ENCODE measurements at regions of chr5 and their contacts with region 1.

Region 1: DNA sequence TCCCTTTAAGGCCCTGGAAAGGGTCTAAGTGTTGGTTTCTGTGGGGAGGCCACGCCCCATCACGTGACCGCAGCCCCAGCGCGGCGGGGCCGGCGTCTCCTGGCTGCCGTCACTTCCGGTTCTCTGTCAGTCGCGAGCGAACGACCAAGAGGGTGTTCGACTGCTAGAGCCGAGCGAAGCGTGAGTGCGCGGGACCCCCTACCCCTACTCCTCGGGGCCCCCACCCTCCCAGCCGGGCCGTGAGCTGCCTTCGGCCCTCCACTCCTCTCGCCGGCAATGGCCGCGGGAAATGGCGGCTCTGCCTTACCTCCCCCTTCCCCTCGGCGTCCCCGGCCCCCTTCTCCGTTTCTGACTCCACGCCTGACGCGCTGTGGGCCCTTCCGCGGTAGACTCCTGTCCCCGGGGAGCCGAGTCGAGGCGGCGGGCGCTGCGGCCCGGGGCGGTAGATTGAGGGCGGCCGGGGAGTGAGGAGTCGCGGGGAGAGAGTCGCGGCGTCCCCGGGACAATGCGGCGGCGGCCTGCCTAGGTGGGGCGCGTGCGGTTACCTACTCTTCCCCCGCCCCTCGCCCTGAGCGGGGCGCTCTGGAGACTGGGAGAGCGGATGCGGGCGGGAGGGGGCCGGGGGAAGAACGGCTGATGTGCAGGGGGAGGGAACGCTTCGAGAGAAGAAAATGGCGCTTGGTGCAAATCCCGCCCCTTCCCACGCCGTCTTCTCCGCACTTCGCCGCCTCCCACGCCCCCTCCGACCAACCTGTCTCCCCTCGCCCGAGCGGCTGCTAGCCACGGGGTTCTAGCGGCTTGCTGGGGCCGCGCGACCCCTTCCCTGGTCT is at the start of gene SUB1:
- DNase-seq: peak; percentile 96
- ATAC-seq: peak; percentile 87
- H3K4me3 Mint-ChIP-seq: peak within 1 kb of the TSS; percentile 93
- H3K27ac Mint-ChIP-seq: peak within 1 kb of the TSS; percentile 99
- H3K4me1 Mint-ChIP-seq: peaks cover 60% of the 10 kb centered on the region
- H3K27me3 Mint-ChIP-seq: no peaks in the 10 kb centered on the region
- total RNA-seq, gene SUB1: 418 to 458 TPM

Region 2: GRCh38 chr5:30838936-30839496 is 1746.6 kb before region 1 on chr5:
- CTCF ChIA-PET with region 1: no interaction called
- POLR2A ChIA-PET with region 1: no interaction called
- intact Hi-C with region 1: no loop called
- DNase-seq: no peak
- ATAC-seq: no peak
- H3K4me3 Mint-ChIP-seq: no peak overlapping the region
- H3K27ac Mint-ChIP-seq: no peak overlapping the region
- H3K4me1 Mint-ChIP-seq: no peaks in the 10 kb centered on the region
- H3K27me3 Mint-ChIP-seq: no peaks in the 10 kb centered on the region

Region 3: GRCh38 chr5:31078956-31079355 is 1506.7 kb before region 1 on chr5:
- CTCF ChIA-PET with region 1: no interaction called
- POLR2A ChIA-PET with region 1: no interaction called
- intact Hi-C with region 1: no loop called
- DNase-seq: no peak
- ATAC-seq: no peak
- H3K4me3 Mint-ChIP-seq: no peak overlapping the region
- H3K27ac Mint-ChIP-seq: no peak overlapping the region
- H3K4me1 Mint-ChIP-seq: no peaks in the 10 kb centered on the region
- H3K27me3 Mint-ChIP-seq: no peaks in the 10 kb centered on the region

Region 4: DNA sequence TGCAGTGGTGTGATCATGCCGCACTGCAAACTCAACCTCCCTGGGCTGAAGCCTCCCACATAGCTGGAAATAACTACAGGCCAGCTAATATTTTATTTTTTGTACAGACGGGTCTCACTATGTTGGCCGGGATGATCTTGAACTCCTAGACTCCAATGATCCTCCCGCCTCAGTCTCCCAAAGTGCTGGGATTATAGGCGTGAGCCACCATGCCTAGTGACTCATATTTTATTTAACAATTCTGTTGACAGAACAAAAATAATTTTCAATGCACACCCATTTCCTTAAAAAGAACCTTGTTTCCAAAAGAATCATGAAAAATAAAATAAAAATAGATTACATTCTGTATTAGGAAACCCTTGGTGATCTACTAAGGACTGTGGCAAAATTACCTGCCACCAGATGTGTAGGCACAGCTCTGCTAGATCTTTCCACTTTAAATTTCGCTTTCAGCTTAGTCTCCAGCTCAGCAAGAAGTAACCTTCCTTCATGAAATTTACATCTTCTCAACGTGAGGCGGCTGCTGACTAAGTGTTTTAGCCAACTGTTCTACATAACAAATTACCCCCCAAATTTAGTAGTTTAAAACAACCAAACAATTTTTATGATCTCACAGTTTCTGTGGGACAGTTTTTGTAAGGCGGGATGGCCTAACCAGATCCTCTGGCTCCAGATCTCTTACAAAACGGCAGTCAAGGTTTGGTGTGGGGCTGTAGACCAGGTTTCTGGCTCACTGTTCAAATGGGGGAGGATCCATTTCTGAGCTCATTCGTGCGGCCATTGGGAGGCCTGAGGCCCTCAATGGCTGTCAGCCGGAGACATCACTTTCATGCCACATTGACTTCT is 378.9 kb before region 1 on chr5:
- CTCF ChIA-PET with region 1: no interaction called
- POLR2A ChIA-PET with region 1: no interaction called
- intact Hi-C with region 1: loop called in 1 of 2 experiments (anchors 1 kb)
- DNase-seq: no peak
- ATAC-seq: no peak
- H3K4me3 Mint-ChIP-seq: no peak overlapping the region
- H3K27ac Mint-ChIP-seq: peak overlapping the region; percentile 82
- H3K4me1 Mint-ChIP-seq: peaks cover 39% of the 10 kb centered on the region
- H3K27me3 Mint-ChIP-seq: peaks cover under 1% of the 10 kb centered on the region

Region 5: DNA sequence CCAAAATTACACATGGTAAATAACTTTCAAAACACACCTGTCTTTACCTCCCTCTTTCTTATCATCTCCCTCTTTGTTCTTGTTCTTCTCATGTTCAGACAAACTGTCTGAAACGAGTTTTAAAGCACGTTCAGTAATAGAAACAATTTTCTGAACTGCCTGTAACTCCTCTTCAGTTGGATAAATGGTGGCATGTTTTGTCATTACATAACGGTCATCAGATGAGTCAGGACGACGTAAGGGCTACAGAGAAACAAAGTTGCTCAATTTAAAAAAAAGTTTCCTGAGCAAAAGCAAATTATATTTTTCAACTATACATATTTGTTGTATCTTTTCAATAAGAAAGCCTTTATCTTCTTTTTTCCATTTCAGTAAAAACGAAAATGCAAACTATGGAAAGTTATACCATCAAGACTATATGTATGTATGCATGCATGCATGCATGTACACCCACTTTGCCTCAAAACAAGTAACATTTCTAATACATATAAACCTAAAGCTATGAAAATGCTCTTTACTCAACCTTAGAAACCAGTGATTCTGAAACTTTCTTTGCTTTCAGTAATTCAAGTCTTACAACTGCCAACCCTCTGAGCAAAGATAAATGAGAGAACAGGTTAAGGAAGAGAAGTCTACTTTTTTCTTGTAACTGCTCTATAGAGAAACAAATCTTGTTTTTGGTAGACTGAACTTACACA is 197.1 kb before region 1 on chr5:
- CTCF ChIA-PET with region 1: interaction called, 3 read pairs
- POLR2A ChIA-PET with region 1: interaction called, 5 read pairs
- intact Hi-C with region 1: loop called in 1 of 2 experiments (anchors 5 kb)
- DNase-seq: no peak
- ATAC-seq: peak; percentile 75
- H3K4me3 Mint-ChIP-seq: no peak overlapping the region
- H3K27ac Mint-ChIP-seq: peak overlapping the region; percentile 88
- H3K4me1 Mint-ChIP-seq: peaks cover 11% of the 10 kb centered on the region
- H3K27me3 Mint-ChIP-seq: no peaks in the 10 kb centered on the region

Region 6: DNA sequence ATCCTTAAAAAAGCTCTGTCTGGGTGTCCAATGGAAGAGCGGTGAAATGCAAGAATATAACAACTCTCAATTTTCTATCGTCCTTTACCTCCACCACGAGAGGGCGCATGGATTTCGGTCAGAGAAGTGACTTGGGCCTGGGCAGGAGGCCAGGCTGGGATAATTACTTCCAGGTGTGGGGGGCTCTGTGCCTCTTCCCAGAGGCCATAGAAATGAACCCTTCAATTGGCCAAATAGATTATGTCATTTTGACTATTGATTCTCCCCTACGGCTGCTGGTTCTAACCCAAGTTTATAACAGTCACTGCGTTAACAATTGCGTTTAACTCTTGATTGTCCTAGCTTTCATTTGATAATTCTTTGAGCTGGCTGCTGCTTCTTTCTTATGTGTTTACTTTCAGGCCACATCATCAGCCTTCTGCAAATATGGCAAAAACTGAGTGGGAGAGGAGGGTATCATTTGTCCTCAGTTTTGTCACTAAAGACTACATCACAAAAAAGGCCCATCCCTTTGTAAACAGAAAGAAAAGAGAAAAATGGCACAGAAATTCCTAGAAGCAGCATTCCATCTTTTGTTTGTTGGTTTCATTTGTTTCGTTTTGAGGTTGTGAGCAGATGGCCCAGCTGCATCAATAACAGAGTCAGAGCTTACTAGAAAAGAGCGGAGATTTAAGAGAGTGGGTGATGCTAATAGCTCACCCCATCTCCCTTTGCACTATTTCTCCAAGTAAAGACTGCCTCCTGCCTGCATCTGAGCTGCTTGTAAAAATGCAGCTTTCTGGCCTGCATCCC is 95.7 kb before region 1 on chr5:
- CTCF ChIA-PET with region 1: interaction called, 244 read pairs
- POLR2A ChIA-PET with region 1: interaction called, 4 read pairs
- intact Hi-C with region 1: loop called (anchors 1 kb)
- DNase-seq: peak; percentile 85
- ATAC-seq: peak; percentile 53
- H3K4me3 Mint-ChIP-seq: no peak overlapping the region
- H3K27ac Mint-ChIP-seq: no peak overlapping the region
- H3K4me1 Mint-ChIP-seq: no peaks in the 10 kb centered on the region
- H3K27me3 Mint-ChIP-seq: no peaks in the 10 kb centered on the region

Region 7: GRCh38 chr5:32542216-32543059 is 43.2 kb before region 1 on chr5:
- CTCF ChIA-PET with region 1: interaction called, 16 read pairs
- POLR2A ChIA-PET with region 1: interaction called, 4 read pairs
- intact Hi-C with region 1: loop called (anchors 1 kb)
- DNase-seq: peak; percentile 61
- ATAC-seq: peak; percentile 82
- H3K4me3 Mint-ChIP-seq: peak overlapping the region; percentile 36
- H3K27ac Mint-ChIP-seq: peak overlapping the region; percentile 95
- H3K4me1 Mint-ChIP-seq: peaks cover 52% of the 10 kb centered on the region
- H3K27me3 Mint-ChIP-seq: no peaks in the 10 kb centered on the region

Region 8: GRCh38 chr5:32865475-32865874 is 279.8 kb after region 1 on chr5:
- CTCF ChIA-PET with region 1: no interaction called
- POLR2A ChIA-PET with region 1: no interaction called
- intact Hi-C with region 1: no loop called
- DNase-seq: no peak
- ATAC-seq: no peak
- H3K4me3 Mint-ChIP-seq: no peak overlapping the region
- H3K27ac Mint-ChIP-seq: no peak overlapping the region
- H3K4me1 Mint-ChIP-seq: no peaks in the 10 kb centered on the region
- H3K27me3 Mint-ChIP-seq: no peaks in the 10 kb centered on the region

Region 9: DNA sequence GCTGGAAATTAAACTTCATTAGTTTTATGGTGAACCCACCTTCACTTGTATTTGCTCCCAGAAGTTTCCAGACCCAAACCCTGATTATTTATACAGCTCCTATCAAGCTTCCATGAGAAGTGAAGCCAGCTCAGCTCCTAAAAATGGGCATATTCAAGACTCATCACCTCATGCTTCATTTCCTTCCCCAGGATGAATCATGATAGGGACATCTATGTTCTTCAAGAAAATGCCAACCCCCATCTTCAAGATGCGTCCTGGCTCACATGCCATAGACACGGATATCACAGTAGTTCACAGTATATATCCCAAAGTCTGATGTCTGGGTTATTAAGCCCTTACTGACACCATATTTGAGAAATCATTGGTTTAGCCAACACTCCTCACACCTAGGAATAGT is 343.1 kb after region 1 on chr5:
- CTCF ChIA-PET with region 1: no interaction called
- POLR2A ChIA-PET with region 1: no interaction called
- intact Hi-C with region 1: no loop called
- DNase-seq: no peak
- ATAC-seq: no peak
- H3K4me3 Mint-ChIP-seq: no peak overlapping the region
- H3K27ac Mint-ChIP-seq: no peak overlapping the region
- H3K4me1 Mint-ChIP-seq: no peaks in the 10 kb centered on the region
- H3K27me3 Mint-ChIP-seq: no peaks in the 10 kb centered on the region

Region 10: DNA sequence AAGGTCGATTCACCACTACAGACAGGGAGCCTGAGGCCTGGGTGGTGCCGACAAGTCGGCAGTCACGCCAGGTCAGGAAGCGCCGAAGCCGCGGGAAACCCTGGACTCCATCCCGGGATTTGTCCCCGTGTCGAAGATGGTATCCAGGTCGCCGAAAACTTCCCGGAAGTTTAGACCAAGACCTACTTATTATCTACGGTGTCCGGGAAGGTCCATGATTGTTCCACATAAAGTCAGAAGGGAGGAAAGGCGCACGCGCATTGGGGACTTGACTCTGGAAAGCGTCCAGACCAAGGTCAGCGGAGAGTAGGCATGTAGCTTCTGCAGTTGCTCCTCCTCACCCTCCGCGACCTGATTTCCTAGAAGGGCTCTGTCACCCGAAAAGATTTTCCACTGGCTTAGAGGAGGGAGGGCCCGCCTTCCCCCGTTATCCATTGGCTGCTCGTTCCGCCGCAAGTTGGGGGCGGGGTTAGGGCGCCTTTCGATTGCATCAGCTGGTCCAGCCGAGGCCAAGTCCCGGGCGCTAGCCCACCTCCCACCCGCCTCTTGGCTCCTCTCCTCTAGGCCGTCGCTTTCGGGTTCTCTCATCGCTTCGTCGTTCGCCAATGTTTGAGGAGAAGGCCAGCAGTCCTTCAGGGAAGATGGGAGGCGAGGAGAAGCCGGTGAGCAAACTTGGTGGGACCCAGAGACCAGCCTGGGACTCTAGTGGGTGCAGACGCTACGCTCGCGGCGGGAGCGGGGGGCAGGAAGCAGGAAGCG is 855.0 kb after region 1 on chr5 and contains the start of gene TARS1:
- CTCF ChIA-PET with region 1: interaction called, 3 read pairs
- POLR2A ChIA-PET with region 1: no interaction called
- intact Hi-C with region 1: loop called in 1 of 2 experiments (anchors 1 kb)
- DNase-seq: peak; percentile 96
- ATAC-seq: peak; percentile 96
- H3K4me3 Mint-ChIP-seq: no peak within 1 kb of the TSS
- H3K27ac Mint-ChIP-seq: no peak within 1 kb of the TSS
- H3K4me1 Mint-ChIP-seq: peaks cover 35% of the 10 kb centered on the region
- H3K27me3 Mint-ChIP-seq: no peaks in the 10 kb centered on the region
- total RNA-seq, gene TARS1: 285 to 357 TPM

Measured in activated CD4-positive, alpha-beta T cell treated with anti-CD3 and anti-CD28 coated beads for 36 hours (primary cell).